ENCODE measurements at regions of chr10 and their contacts with region 1.

Region 1: DNA sequence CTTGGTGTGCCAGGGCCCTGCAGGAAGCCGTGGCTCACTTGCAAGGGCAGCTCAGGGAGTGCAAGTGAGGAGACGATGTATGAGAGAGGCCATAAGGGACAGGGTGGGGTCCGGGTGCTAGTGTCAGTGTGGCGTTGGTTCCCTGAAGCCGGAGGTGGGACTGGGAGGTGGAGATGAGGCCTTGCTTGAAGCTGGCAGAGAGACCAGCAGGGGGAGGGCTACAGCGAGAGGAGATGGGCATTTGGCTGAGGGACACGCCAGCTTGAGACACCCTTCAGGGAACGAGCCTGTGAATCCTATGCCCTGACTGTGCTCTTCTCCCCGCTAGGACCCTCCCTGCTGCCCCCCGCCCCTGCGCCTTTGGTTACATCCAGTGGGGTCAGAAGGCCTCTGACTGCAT is 529.1 kb downstream of the TCERG1L start:
- DNase-seq: no peak
- H3K4me3 ChIP-seq: no peak overlapping the region
- H3K27ac ChIP-seq: no peak overlapping the region
- H3K4me1 ChIP-seq: no peaks in the 10 kb centered on the region
- H3K27me3 ChIP-seq: peaks cover 0 to 17% of the 10 kb centered on the region in 2 donors
- CTCF ChIP-seq: no peak
- POLR2A ChIP-seq: no peak

Region 2: GRCh38 chr10:130737621-130738020 is 44.8 kb before region 1 on chr10:
- intact Hi-C with region 1: loop called (anchors 1 kb)
- DNase-seq: peak in 1 of 2 donors; percentile 34
- H3K4me3 ChIP-seq: no peak overlapping the region
- H3K27ac ChIP-seq: no peak overlapping the region
- H3K4me1 ChIP-seq: no peaks in the 10 kb centered on the region
- H3K27me3 ChIP-seq: peaks cover 0 to 15% of the 10 kb centered on the region in 2 donors
- CTCF ChIP-seq: no peak
- POLR2A ChIP-seq: no peak

Region 3: GRCh38 chr10:130854151-130854550 is 71.7 kb after region 1 on chr10:
- intact Hi-C with region 1: no loop called
- DNase-seq: no peak
- H3K4me3 ChIP-seq: no peak overlapping the region
- H3K27ac ChIP-seq: no peak overlapping the region
- H3K4me1 ChIP-seq: no peaks in the 10 kb centered on the region
- H3K27me3 ChIP-seq: peaks cover 0 to 15% of the 10 kb centered on the region in 2 donors
- CTCF ChIP-seq: no peak
- POLR2A ChIP-seq: no peak

Measured in breast epithelium (tissue), 4 donors.